WTC11 (cell line): ENCODE measurements at regions of chr14 and their contacts with region 1.

Region 1: DNA sequence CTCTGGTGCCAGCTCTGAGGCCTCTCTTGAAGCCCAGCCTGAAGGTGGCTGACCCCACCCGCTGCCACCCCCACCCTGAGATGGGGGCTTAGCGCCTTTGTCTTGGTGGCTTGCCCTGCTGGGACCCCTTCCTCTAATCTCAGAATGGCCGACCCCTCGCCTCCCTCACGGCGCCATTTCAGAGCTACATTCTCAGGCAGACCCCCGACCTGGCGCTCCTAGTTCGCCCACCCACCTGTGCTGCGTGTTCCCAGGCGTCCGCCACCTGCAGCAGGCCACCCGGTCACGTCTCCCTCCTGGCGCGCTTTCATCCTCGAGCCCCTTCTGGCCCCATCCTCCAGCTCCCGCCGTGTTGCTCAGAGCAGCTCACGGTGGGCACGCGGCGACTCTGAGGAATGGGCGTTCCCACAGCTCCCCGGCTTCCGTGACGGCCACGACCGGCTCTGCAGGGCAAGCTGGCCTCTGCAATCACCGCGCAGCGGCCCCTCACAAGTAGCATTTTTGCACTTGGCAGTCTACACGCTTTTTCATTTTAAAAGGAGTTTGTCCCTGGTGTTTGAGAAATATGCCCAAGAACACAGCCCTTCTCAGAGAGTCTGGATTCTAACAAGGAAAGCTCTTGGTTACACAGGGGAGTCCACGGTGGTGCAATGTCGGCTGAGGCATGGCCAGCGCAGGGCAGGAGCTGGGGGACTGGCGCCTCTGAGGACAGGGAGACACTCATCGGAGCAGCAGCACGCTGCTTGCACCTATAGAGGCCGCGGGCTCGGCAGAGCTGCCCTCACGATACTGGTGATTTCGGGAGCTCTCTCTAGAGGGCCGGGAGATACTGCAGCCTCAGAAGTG is 105.7 kb upstream of the C14orf180 start:
- DNase-seq: no peak
- ATAC-seq: peak; percentile 72
- H3K4me3 Mint-ChIP-seq: no peak overlapping the region
- H3K27ac Mint-ChIP-seq: no peak overlapping the region
- H3K4me1 Mint-ChIP-seq: 0 out of 2 replicates have a peak, but pooled peaks cover 4% of the 10 kb centered on the region
- H3K27me3 Mint-ChIP-seq: no peaks in the 10 kb centered on the region
- CTCF ChIP-seq: no peak

Region 2: GRCh38 chr14:104341532-104342434 is 132.1 kb before region 1 on chr14:
- CTCF ChIA-PET with region 1: interaction called, 11 read pairs
- POLR2A ChIA-PET with region 1: no interaction called
- DNase-seq: peak; percentile 86
- ATAC-seq: peak; percentile 92
- H3K4me3 Mint-ChIP-seq: peak overlapping the region; percentile 39
- H3K27ac Mint-ChIP-seq: no peak overlapping the region
- H3K4me1 Mint-ChIP-seq: peaks cover 9% of the 10 kb centered on the region
- H3K27me3 Mint-ChIP-seq: peaks cover 23% of the 10 kb centered on the region
- CTCF ChIP-seq: peak; percentile 76

Region 3: GRCh38 chr14:104370256-104370870 is 103.5 kb before region 1 on chr14:
- CTCF ChIA-PET with region 1: interaction called, 19 read pairs
- POLR2A ChIA-PET with region 1: no interaction called
- DNase-seq: peak; percentile 66
- ATAC-seq: peak; percentile 82
- H3K4me3 Mint-ChIP-seq: no peak overlapping the region
- H3K27ac Mint-ChIP-seq: no peak overlapping the region
- H3K4me1 Mint-ChIP-seq: peaks cover 4% of the 10 kb centered on the region; the same call in 1 of the 2 replicates
- H3K27me3 Mint-ChIP-seq: no peaks in the 10 kb centered on the region; the same call in 1 of the 2 replicates
- CTCF ChIP-seq: no peak

Region 4: GRCh38 chr14:104443391-104444158 is 30.3 kb before region 1 on chr14:
- CTCF ChIA-PET with region 1: interaction called, 11 read pairs
- POLR2A ChIA-PET with region 1: no interaction called
- DNase-seq: peak; percentile 64
- ATAC-seq: peak; percentile 95
- H3K4me3 Mint-ChIP-seq: no peak overlapping the region
- H3K27ac Mint-ChIP-seq: peak overlapping the region; percentile 44; the same call in 1 of the 2 replicates
- H3K4me1 Mint-ChIP-seq: peaks cover 9% of the 10 kb centered on the region
- H3K27me3 Mint-ChIP-seq: peaks cover 5% of the 10 kb centered on the region
- CTCF ChIP-seq: no peak

Region 5: GRCh38 chr14:104460791-104461651 is 12.9 kb before region 1 on chr14:
- CTCF ChIA-PET with region 1: interaction called, 29 read pairs
- POLR2A ChIA-PET with region 1: interaction called, 3 read pairs
- DNase-seq: peak; percentile 72
- ATAC-seq: peak; percentile 93
- H3K4me3 Mint-ChIP-seq: peak overlapping the region; percentile 58
- H3K27ac Mint-ChIP-seq: no peak overlapping the region
- H3K4me1 Mint-ChIP-seq: peaks cover 11% of the 10 kb centered on the region
- H3K27me3 Mint-ChIP-seq: peaks cover 39% of the 10 kb centered on the region
- CTCF ChIP-seq: no peak

Region 6: DNA sequence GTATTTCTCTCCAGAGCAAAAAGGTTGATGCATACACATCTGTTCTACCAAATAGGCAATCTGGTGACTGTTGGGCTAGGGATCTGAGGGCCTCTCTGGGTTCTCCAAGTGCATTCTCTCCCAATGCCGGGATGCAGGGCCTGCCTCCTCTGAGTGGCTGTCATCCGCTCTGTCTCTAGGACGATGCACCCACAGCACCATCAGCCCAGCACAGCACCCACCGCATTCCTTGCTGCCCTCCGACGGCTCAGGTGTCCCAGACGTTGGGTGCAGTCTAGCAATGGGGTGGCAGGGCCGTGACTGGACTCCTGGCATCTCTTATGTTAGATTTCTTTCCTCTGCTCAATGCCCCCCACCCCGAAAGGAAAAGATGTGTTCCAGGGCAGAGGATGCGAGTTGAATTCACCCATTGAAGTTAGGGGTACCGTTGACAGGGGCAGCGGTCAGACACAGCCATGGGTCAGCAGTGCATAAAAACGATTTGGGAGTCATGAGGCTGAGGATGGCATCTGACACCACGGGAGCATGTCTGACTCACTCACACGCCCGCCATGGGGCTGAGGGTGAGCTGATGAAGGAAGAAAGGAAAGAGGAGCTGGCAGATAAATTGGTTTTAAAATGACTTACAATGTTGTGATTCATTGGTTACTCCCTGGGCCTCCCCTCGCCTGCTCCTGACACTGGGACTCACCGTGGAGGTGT is 12.5 kb after region 1 on chr14:
- CTCF ChIA-PET with region 1: interaction called, 10 read pairs
- POLR2A ChIA-PET with region 1: no interaction called
- DNase-seq: no peak
- ATAC-seq: no peak
- H3K4me3 Mint-ChIP-seq: no peak overlapping the region
- H3K27ac Mint-ChIP-seq: no peak overlapping the region
- H3K4me1 Mint-ChIP-seq: peaks cover 11% of the 10 kb centered on the region
- H3K27me3 Mint-ChIP-seq: peaks cover 5% of the 10 kb centered on the region
- CTCF ChIP-seq: no peak

Region 7: GRCh38 chr14:104499784-104500760 is 26.2 kb after region 1 on chr14:
- CTCF ChIA-PET with region 1: no interaction called
- POLR2A ChIA-PET with region 1: no interaction called
- DNase-seq: no peak
- ATAC-seq: no peak
- H3K4me3 Mint-ChIP-seq: no peak overlapping the region
- H3K27ac Mint-ChIP-seq: no peak overlapping the region
- H3K4me1 Mint-ChIP-seq: no peaks in the 10 kb centered on the region
- H3K27me3 Mint-ChIP-seq: peaks cover 3% of the 10 kb centered on the region
- CTCF ChIP-seq: no peak